Vagina (tissue), 2 donors: ENCODE measurements at regions of chr16 and their contacts with region 1.

Region 1: GRCh38 chr16:20383106-20384029 is 21.2 kb downstream of the PDILT start:
- DNase-seq: no peak
- H3K4me3 ChIP-seq: no peak overlapping the region
- H3K27ac ChIP-seq: no peak overlapping the region
- H3K4me1 ChIP-seq: peaks cover 7% of the 10 kb centered on the region
- H3K27me3 ChIP-seq: no peaks in the 10 kb centered on the region
- CTCF ChIP-seq: peak; percentile 42 to 67 (median 44)
- POLR2A ChIP-seq: no peak

Region 2: DNA sequence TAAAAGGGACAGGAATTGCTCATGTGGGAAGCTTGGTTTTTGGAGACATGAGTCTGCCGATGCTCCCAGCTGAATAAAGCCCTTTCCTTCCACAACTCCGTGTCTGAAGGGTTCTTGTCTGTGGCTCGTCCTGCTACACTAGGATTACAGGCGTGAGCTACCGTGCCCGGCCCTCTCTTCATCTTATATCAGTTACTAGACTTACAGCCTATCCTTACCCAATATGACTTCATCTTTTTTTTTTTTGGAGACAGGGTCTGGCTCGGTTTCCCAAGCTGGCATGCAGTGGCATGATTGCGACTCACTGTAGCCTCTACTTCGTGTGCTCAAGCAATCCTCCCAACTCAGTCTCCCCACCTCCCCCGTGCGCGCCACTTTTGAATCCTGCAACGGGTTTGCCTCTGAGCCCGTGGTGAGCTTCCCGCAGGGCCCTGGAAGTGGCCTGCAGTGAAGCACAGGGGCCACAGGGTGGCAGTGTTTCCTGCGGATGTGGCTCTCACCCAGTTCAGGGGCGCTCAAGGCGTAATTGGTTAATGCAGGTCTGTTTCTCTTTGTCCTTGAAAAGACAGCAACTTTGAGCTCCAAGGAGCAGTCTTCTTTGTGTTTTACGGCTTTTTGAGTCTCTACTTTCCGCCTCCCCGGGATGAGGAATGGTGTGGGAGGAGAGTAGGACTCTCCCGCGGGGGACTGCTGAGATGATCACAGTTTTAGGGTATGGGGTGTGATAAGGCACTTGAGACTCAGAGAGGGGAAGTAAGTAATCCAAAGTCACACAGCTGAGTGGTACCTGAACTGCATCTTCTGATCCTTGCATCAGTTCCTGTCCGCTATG is 476.0 kb before region 1 on chr16:
- intact Hi-C with region 1: loop called (anchors 10 kb)
- DNase-seq: no peak
- H3K4me3 ChIP-seq: no peak overlapping the region
- H3K27ac ChIP-seq: no peak overlapping the region
- H3K4me1 ChIP-seq: no peaks in the 10 kb centered on the region
- H3K27me3 ChIP-seq: no peaks in the 10 kb centered on the region
- CTCF ChIP-seq: peak; percentile 78 to 86 (median 82)
- POLR2A ChIP-seq: no peak